ENCODE measurements at regions of chr6 and their contacts with region 1.

Region 1: GRCh38 chr6:155174576-155175211 is 89.1 kb upstream of the CLDN20 start:
- DNase-seq: no peak
- ATAC-seq: peak; percentile 72
- H3K4me3 ChIP-seq: no peak overlapping the region
- H3K27ac ChIP-seq: no peak overlapping the region
- H3K4me1 ChIP-seq: peaks cover 25% of the 10 kb centered on the region
- H3K27me3 ChIP-seq: no peaks in the 10 kb centered on the region
- CTCF ChIP-seq: peak; percentile 56 to 80 (median 71); a peak in 5 of 6 replicates
- EP300 ChIP-seq: no peak
- POLR2A ChIP-seq: no peak
- RAD21 ChIP-seq: peak; percentile 93

Region 2: DNA sequence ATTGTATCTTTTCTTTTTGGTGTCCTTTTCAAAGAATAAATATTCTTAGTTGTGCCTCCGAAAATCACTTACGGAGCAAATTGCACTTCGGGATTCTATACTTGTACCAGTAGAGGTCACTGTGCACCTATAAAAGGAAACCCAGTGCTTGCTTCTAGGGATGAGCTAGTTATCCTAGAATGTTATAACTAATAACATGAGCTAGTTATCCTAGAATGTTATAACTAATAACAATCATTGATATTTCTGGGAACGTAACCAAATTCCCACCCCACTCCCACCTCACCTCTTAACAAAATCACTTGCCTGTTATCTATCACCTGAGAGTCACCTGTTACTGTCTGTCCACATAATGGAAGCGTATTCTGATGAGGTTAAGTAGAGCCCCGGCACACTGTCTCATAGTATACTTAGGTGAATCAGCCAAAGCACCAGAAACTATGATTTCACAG is 306.5 kb before region 1 on chr6:
- CTCF ChIA-PET with region 1: interaction called, 6 read pairs
- POLR2A ChIA-PET with region 1: no interaction called
- RAD21 ChIA-PET with region 1: interaction called, 6 read pairs
- SMC1A ChIA-PET with region 1: interaction called, 3 read pairs
- in situ Hi-C with region 1: no loop called
- intact Hi-C with region 1: loop called (anchors 1 kb)
- DNase-seq: no peak
- ATAC-seq: no peak
- H3K4me3 ChIP-seq: no peak overlapping the region
- H3K27ac ChIP-seq: no peak overlapping the region
- H3K4me1 ChIP-seq: no peaks in the 10 kb centered on the region
- H3K27me3 ChIP-seq: no peaks in the 10 kb centered on the region
- CTCF ChIP-seq: peak; percentile 32 to 47 (median 45); a peak in 5 of 6 replicates
- EP300 ChIP-seq: no peak
- POLR2A ChIP-seq: no peak
- RAD21 ChIP-seq: peak; percentile 62

Region 3: GRCh38 chr6:154945206-154945885 is 229.3 kb before region 1 on chr6:
- CTCF ChIA-PET with region 1: no interaction called
- POLR2A ChIA-PET with region 1: no interaction called
- RAD21 ChIA-PET with region 1: interaction called, 3 read pairs
- SMC1A ChIA-PET with region 1: interaction called, 4 read pairs
- in situ Hi-C with region 1: no loop called
- intact Hi-C with region 1: loop called (anchors 5 kb)
- DNase-seq: no peak
- ATAC-seq: no peak
- H3K4me3 ChIP-seq: no peak overlapping the region
- H3K27ac ChIP-seq: no peak overlapping the region
- H3K4me1 ChIP-seq: no peaks in the 10 kb centered on the region
- H3K27me3 ChIP-seq: no peaks in the 10 kb centered on the region
- CTCF ChIP-seq: no peak
- EP300 ChIP-seq: no peak
- POLR2A ChIP-seq: no peak
- RAD21 ChIP-seq: no peak

Region 4: GRCh38 chr6:155154158-155154830 is 20.4 kb before region 1 on chr6:
- CTCF ChIA-PET with region 1: interaction called, 23 read pairs
- POLR2A ChIA-PET with region 1: no interaction called
- RAD21 ChIA-PET with region 1: interaction called, 18 read pairs
- SMC1A ChIA-PET with region 1: interaction called, 12 read pairs
- in situ Hi-C with region 1: no loop called
- intact Hi-C with region 1: no loop called
- DNase-seq: no peak
- ATAC-seq: peak; percentile 38
- H3K4me3 ChIP-seq: no peak overlapping the region
- H3K27ac ChIP-seq: no peak overlapping the region
- H3K4me1 ChIP-seq: peaks cover 16% of the 10 kb centered on the region
- H3K27me3 ChIP-seq: no peaks in the 10 kb centered on the region
- CTCF ChIP-seq: no peak
- EP300 ChIP-seq: no peak
- POLR2A ChIP-seq: no peak
- RAD21 ChIP-seq: no peak

Region 5: DNA sequence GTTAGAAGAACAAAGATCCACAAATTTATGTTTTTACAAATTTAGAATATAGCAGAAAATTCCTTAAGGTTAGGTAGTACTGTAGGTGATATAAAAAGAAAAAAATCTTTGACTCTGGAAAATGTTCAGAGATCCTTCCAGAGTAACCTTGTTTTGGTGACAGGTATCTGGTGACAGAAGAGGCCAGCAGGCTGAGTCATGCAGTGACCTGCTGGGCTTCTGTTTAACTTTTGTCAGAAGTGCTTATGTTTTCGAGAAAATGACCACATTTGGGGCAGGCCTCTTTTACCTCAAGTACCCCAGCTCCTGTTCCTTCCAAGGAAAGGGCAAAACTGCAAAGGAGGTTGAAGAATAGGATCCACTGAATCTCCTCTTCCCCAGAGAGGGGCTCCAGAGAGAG is 78.6 kb after region 1 on chr6:
- CTCF ChIA-PET with region 1: interaction called, 228 read pairs
- POLR2A ChIA-PET with region 1: interaction called, 8 read pairs
- RAD21 ChIA-PET with region 1: interaction called, 178 read pairs
- SMC1A ChIA-PET with region 1: interaction called, 224 read pairs
- in situ Hi-C with region 1: loop called (anchors 5 kb)
- intact Hi-C with region 1: loop called (anchors 1 kb)
- DNase-seq: no peak
- ATAC-seq: no peak
- H3K4me3 ChIP-seq: no peak overlapping the region
- H3K27ac ChIP-seq: no peak overlapping the region
- H3K4me1 ChIP-seq: no peaks in the 10 kb centered on the region
- H3K27me3 ChIP-seq: no peaks in the 10 kb centered on the region
- CTCF ChIP-seq: no peak
- EP300 ChIP-seq: no peak
- POLR2A ChIP-seq: no peak
- RAD21 ChIP-seq: no peak

Region 6: GRCh38 chr6:155314092-155314772 is 139.5 kb after region 1 on chr6 and contains the start of gene TFB1M:
- CTCF ChIA-PET with region 1: interaction called, 54 read pairs
- POLR2A ChIA-PET with region 1: interaction called, 4 read pairs
- RAD21 ChIA-PET with region 1: interaction called, 54 read pairs
- SMC1A ChIA-PET with region 1: interaction called, 51 read pairs
- in situ Hi-C with region 1: no loop called
- intact Hi-C with region 1: loop called (anchors 2 kb)
- DNase-seq: peak; percentile 99
- ATAC-seq: peak; percentile 96
- H3K4me3 ChIP-seq: peak within 1 kb of the TSS; percentile 88
- H3K27ac ChIP-seq: peak within 1 kb of the TSS; percentile 95
- H3K4me1 ChIP-seq: no peaks in the 10 kb centered on the region
- H3K27me3 ChIP-seq: no peaks in the 10 kb centered on the region
- CTCF ChIP-seq: no peak
- EP300 ChIP-seq: 0 out of 4 replicates have a peak, but pooled peaks of 1 of the 2 experiments have one; percentile 30
- POLR2A ChIP-seq: peak; percentile 97
- RAD21 ChIP-seq: no peak
- polyA plus RNA-seq, gene TFB1M: 95.8 to 117 TPM